Activated CD4-positive, alpha-beta T cell treated with anti-CD3 and anti-CD28 coated beads, Interleukin-2, amount 10 ng/mL, durations not matched to agents 24 days and 14 days (primary cell): ENCODE measurements at regions of chr2 and their contacts with region 1.

Region 1: GRCh38 chr2:173210270-173211196 is 134.9 kb downstream of the MAP3K20 start:
- DNase-seq: peak; percentile 87
- H3K4me3 Mint-ChIP-seq: no peak overlapping the region
- H3K27ac Mint-ChIP-seq: no peak overlapping the region
- H3K4me1 Mint-ChIP-seq: peaks cover 6% of the 10 kb centered on the region
- H3K27me3 Mint-ChIP-seq: no peaks in the 10 kb centered on the region

Region 2: GRCh38 chr2:172806493-172806892 is 404.0 kb before region 1 on chr2:
- intact Hi-C with region 1: loop called (anchors 10 kb)
- DNase-seq: peak; percentile 65
- H3K4me3 Mint-ChIP-seq: no peak overlapping the region
- H3K27ac Mint-ChIP-seq: no peak overlapping the region
- H3K4me1 Mint-ChIP-seq: no peaks in the 10 kb centered on the region
- H3K27me3 Mint-ChIP-seq: peaks cover 6% of the 10 kb centered on the region

Region 3: DNA sequence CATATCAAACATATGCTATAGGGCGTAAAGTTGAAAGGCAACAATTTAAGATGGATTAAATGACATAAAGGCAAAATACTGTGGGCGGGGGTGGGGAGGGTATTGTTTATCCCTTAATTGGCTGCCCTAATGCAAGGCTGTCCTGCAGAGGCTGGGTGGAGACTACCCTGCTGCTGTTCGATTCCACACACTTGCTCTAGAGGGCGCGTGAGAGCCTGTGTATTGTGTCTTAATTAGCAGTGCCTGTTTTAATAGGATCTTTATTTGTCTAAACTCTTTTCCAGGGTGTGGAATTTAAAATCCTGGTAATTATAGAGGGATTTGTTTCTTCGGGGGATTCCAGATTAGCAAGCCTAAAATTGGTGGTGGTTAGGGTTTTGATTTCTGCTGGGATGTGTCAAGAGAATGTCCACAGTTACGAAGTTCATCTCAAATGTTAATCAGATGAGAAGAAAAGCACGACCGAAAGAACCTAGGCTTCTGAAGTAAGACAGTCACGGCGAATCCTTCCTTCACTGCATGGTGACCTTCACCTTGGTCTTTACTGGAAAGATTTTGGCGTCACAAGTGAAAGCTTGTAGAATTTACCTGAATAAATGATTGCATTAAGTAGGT is 238.4 kb before region 1 on chr2:
- intact Hi-C with region 1: loop called (anchors 1 kb)
- DNase-seq: peak; percentile 82
- H3K4me3 Mint-ChIP-seq: no peak overlapping the region
- H3K27ac Mint-ChIP-seq: no peak overlapping the region
- H3K4me1 Mint-ChIP-seq: peaks cover 11% of the 10 kb centered on the region
- H3K27me3 Mint-ChIP-seq: peaks cover 8% of the 10 kb centered on the region

Region 4: GRCh38 chr2:173075781-173076580 is 134.6 kb before region 1 on chr2 and contains the start of gene MAP3K20:
- intact Hi-C with region 1: loop called (anchors 1 kb)
- DNase-seq: peak; percentile 90
- H3K4me3 Mint-ChIP-seq: peak within 1 kb of the TSS; percentile 83
- H3K27ac Mint-ChIP-seq: peak within 1 kb of the TSS; percentile 79
- H3K4me1 Mint-ChIP-seq: peaks cover 22% of the 10 kb centered on the region
- H3K27me3 Mint-ChIP-seq: peaks cover 30% of the 10 kb centered on the region
- total RNA-seq, gene MAP3K20: 17.9 and 19.1 TPM in 2 replicates